ENCODE measurements at regions of chr1 and their contacts with region 1.

Region 1: GRCh38 chr1:209815931-209816341 is 10.0 kb upstream of the IRF6 start:
- DNase-seq: no peak
- CTCF ChIP-seq: no peak

Region 2: DNA sequence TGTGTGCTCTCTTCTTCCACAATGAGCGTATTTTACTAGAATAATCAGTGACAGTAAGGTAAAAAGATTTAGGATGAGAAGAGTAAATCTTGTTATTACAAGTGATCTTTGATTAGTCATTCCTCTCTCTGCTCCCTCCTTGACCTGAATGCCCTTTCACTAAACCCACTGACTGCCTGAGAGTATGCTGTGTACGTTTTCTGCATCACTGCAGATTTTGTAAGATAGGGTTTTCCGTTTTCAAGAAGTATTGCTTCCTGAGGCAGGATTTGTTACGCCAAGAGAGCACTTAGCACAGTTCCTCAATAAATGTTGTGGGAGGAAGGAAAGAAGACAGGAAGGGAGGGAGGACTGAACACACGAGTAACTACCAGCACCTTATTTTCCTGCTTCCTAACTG is 156.0 kb before region 1 on chr1:
- CTCF ChIA-PET with region 1: no interaction called
- POLR2A ChIA-PET with region 1: no interaction called
- DNase-seq: peak; percentile 55
- CTCF ChIP-seq: no peak

Region 3: GRCh38 chr1:209797978-209798639 is 17.8 kb before region 1 on chr1:
- CTCF ChIA-PET with region 1: interaction called, 16 read pairs
- POLR2A ChIA-PET with region 1: no interaction called
- DNase-seq: no peak
- CTCF ChIP-seq: no peak